ENCODE measurements at regions of chr17 and their contacts with region 1.

Region 1: GRCh38 chr17:79087428-79088143 is 13.0 kb downstream of the ENGASE start:
- DNase-seq: peak; percentile 84
- ATAC-seq: peak; percentile 59

Region 2: DNA sequence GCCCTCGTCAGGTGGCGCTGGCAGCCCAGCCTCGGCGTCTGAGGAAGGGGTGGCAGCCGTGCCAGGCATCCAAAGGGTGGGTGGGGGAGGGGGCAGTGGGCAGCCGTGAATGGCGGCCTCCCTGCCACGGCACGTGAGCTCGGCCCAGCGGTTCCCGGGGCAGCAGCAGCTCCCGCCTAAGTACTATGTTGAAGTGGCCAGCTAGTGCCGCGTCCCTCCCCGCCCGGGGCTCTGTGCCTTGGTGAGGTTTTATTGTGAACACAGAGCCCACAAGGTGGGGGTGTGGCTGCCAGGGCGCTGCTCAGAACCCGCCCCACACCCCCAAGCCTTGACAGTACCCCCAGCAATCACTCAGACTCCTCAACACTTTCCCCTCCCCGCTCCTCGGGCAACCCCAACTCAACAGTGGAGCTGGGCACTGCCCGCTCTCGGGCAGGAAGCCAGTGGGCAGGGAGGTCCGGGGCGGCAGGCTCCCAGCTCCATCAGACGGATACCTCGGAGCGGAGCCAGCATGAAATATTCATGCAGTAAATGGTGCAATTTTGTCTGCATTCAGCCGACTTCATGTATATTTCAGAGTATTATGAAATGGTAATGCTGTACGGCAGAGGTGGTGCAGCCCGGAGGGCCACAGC is 67.5 kb after region 1 on chr17:
- intact Hi-C with region 1: loop called (anchors 2 kb)
- DNase-seq: no peak
- ATAC-seq: no peak

Region 3: GRCh38 chr17:79393358-79394202 is 306.0 kb after region 1 on chr17:
- intact Hi-C with region 1: loop called (anchors 1 kb)
- DNase-seq: peak; percentile 89
- ATAC-seq: peak; percentile 86

Measured in Right ventricle myocardium inferior (tissue), 1 donor.